PC-9 (cell line): ENCODE measurements at regions of chr7 and their contacts with region 1.

Region 1: GRCh38 chr7:128963327-128963757 is 25.6 kb downstream of the IRF5 start:
- DNase-seq: no peak
- H3K4me3 ChIP-seq: no peak overlapping the region
- H3K27ac ChIP-seq: no peak overlapping the region
- H3K4me1 ChIP-seq: peaks cover 13% of the 10 kb centered on the region; the same call in 1 of the 2 replicates
- H3K27me3 ChIP-seq: no peaks in the 10 kb centered on the region
- CTCF ChIP-seq: no peak

Region 2: DNA sequence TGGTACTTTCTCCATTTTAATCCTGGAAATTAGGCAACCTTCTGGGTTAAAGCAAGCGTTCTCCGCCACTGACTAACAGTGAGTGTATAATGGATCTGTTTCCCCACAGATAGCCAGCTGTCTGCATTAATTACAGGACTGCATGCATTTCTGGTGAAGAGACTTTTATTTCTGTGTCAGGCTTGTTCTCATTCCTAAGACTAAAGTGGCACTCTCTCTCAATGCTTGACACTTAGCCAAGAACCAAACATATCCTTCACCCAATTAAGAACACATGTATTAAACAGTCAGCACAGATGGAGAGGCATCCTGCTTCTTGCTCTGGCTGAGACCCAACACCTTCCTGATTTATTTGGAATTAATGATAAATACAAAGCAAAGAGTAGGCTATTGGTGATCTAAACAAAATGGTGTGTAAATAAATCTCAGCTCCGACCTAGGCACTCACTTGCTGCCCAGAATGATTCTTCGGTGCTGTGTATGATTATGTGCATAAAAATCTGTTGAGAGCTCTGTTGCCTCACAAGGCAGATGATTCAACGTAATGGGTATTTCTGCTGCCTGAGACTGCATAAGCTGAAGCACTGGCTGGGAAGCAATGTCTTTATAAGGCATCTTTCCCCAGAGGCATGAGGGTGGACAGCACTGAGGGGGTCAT is 207.4 kb before region 1 on chr7:
- CTCF ChIA-PET with region 1: no interaction called
- POLR2A ChIA-PET with region 1: no interaction called
- intact Hi-C with region 1: loop called (anchors 10 kb)
- DNase-seq: no peak
- H3K4me3 ChIP-seq: no peak overlapping the region
- H3K27ac ChIP-seq: no peak overlapping the region
- H3K4me1 ChIP-seq: no peaks in the 10 kb centered on the region
- H3K27me3 ChIP-seq: no peaks in the 10 kb centered on the region
- CTCF ChIP-seq: no peak

Region 3: DNA sequence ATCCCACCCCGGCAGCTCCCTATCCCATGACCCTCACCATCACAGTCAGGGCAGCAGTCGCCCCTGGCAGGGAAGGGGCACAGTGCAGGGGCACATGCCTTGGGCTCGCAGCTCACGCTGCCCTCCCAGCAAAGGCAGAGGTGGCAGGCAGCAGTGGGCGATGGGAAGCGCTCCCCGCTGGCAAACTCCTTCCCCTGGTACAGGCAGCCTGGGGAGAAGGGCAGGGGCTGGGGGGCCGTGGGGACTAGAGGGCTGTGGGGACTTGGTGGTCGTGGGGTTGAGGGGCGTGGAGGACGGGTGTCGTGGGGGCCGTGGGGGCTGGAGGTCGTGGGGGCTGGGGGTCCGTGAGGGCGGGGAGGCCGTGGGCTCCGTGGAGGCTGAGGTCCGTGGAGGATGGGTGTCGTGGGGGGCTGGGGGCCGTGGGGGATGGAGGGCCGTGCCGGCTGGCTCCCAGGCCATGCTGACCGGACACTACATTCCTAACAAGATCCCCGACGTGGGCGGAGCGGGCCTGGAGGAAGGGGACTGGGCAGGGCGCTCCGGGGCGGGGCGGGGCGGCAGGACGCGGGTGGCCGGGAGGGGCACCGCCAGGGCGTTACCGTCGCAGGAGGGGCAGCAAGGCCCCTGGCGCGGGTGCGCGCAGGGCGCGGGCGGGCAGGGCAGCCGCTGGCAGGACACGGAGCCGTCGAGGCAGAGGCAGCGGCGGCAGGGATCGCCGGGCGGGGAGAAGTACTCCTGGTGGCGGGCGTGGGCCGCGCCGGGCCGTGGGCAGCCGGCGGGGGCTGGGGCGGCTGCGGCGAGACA is 72.8 kb before region 1 on chr7:
- CTCF ChIA-PET with region 1: no interaction called
- POLR2A ChIA-PET with region 1: interaction called, 3 read pairs
- intact Hi-C with region 1: loop called (anchors 5 kb)
- DNase-seq: peak; percentile 80 to 94
- H3K4me3 ChIP-seq: peak overlapping the region; percentile 95
- H3K27ac ChIP-seq: peak overlapping the region; percentile 94
- H3K4me1 ChIP-seq: peaks cover 62% of the 10 kb centered on the region
- H3K27me3 ChIP-seq: no peaks in the 10 kb centered on the region
- CTCF ChIP-seq: no peak

Region 4: DNA sequence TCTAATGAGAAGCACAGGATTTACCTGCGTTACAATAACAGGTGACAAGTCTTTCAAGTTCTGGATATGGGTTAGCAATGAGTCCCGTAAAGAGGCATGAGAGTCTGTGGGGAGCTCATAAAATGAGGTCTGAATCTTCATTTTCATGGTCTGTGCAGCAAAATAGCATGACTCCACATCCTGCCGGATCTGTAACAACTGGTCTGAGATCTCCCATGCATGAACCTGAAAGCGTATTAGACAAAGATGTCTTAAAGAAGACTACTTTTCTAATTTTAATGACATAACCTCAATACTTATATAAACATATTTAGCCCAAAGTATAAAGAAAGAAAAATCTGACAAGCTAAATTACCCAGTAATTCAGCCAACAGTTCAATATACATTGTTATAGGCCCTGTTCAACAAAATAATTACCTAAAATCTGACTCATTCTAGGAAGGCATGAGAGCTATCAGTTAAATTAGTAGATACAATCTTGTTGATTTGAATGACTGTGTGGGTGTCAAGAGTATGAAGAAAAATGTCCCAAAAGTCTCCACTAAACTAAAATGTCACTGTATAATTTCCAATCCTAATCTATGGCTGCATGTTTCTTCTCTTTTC is 54.7 kb after region 1 on chr7:
- CTCF ChIA-PET with region 1: no interaction called
- POLR2A ChIA-PET with region 1: no interaction called
- intact Hi-C with region 1: loop called (anchors 10 kb)
- DNase-seq: no peak
- H3K4me3 ChIP-seq: no peak overlapping the region
- H3K27ac ChIP-seq: no peak overlapping the region
- H3K4me1 ChIP-seq: peaks cover 21% of the 10 kb centered on the region; the same call in 1 of the 2 replicates
- H3K27me3 ChIP-seq: no peaks in the 10 kb centered on the region
- CTCF ChIP-seq: no peak

Region 5: DNA sequence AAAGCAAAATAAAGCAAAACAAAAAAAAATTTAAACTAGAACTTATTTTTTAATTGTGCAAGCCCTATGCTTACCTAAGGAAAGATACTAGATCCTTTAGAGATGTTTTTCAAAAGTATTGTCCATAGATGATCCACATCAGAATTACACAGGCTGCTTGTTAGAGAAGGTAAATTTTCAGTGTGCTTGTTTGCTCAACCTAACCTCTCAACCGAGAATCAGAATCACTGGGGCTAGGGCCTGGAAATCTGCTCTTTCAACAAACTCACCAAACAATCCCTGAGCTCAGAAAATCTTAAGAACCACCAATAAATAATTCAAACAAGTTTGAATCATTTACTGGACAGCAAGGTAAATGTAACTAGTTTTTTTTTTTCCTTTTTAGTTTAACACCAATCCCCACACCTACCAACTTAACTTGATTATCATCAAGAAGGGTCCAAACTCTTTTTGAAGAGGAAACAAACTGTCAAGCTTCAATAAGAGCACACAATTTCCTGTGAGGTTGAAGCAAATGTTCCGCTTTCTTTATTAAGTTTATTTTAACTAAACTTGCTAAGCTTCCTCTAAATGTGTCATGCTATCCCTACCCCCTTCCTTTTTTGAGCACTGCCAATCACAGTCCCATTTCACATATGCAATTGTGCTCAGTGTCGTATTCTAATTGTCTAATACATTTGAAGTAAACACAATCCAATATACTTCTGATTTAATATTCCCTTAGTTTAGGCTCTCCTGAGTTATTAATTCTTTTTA is 173.7 kb after region 1 on chr7:
- CTCF ChIA-PET with region 1: no interaction called
- POLR2A ChIA-PET with region 1: interaction called, 11 read pairs
- intact Hi-C with region 1: no loop called
- DNase-seq: no peak
- H3K4me3 ChIP-seq: no peak overlapping the region
- H3K27ac ChIP-seq: no peak overlapping the region
- H3K4me1 ChIP-seq: no peaks in the 10 kb centered on the region
- H3K27me3 ChIP-seq: 0 out of 2 replicates have a peak, but pooled peaks cover under 1% of the 10 kb centered on the region
- CTCF ChIP-seq: no peak